ENCODE measurements at regions of chr12 and their contacts with region 1.

Region 1: GRCh38 chr12:24909667-24910066 is 39.2 kb downstream of the BCAT1 start:
- DNase-seq: no peak
- ATAC-seq: no peak
- H3K4me3 ChIP-seq: no peak overlapping the region
- H3K4me3 Mint-ChIP-seq: no peak overlapping the region
- H3K27ac ChIP-seq: no peak overlapping the region
- H3K27ac Mint-ChIP-seq: no peak overlapping the region
- H3K4me1 ChIP-seq: no peaks in the 10 kb centered on the region
- H3K4me1 Mint-ChIP-seq: no peaks in the 10 kb centered on the region
- H3K27me3 ChIP-seq: no peaks in the 10 kb centered on the region
- H3K27me3 Mint-ChIP-seq: no peaks in the 10 kb centered on the region

Region 2: GRCh38 chr12:24948757-24949722 is 39.4 kb after region 1 on chr12 and contains the start of gene BCAT1:
- CTCF ChIA-PET with region 1: no interaction called
- POLR2A ChIA-PET with region 1: no interaction called
- DNase-seq: peak in 17 of 35 experiments; percentile 2 to 37 (median 7)
- ATAC-seq: peak; percentile 44 to 66 (median 58)
- H3K4me3 ChIP-seq: peak within 1 kb of the TSS; percentile 52 to 82
- H3K4me3 Mint-ChIP-seq: peak within 1 kb of the TSS; percentile 73 to 94 (median 81)
- H3K27ac ChIP-seq: no peak within 1 kb of the TSS
- H3K27ac Mint-ChIP-seq: peak within 1 kb of the TSS in 1 of 2 donors; percentile 24
- H3K4me1 ChIP-seq: peaks cover 10 to 12% of the 10 kb centered on the region in 2 experiments
- H3K4me1 Mint-ChIP-seq: peaks cover 19 to 36% (median 23%) of the 10 kb centered on the region in 3 donors
- H3K27me3 ChIP-seq: peaks cover 0 to 20% of the 10 kb centered on the region in 2 experiments
- H3K27me3 Mint-ChIP-seq: peaks cover 36 to 54% of the 10 kb centered on the region in 2 donors
- total RNA-seq, gene BCAT1: 1.2 to 4.2 (median 3.2) TPM

Region 3: GRCh38 chr12:25009496-25010092 is 99.9 kb after region 1 on chr12:
- CTCF ChIA-PET with region 1: no interaction called
- POLR2A ChIA-PET with region 1: no interaction called
- DNase-seq: no peak
- ATAC-seq: no peak
- H3K4me3 ChIP-seq: no peak overlapping the region
- H3K4me3 Mint-ChIP-seq: no peak overlapping the region
- H3K27ac ChIP-seq: no peak overlapping the region
- H3K27ac Mint-ChIP-seq: no peak overlapping the region
- H3K4me1 ChIP-seq: no peaks in the 10 kb centered on the region
- H3K4me1 Mint-ChIP-seq: peaks cover 0 to 2% (median 0%) of the 10 kb centered on the region in 3 donors
- H3K27me3 ChIP-seq: no peaks in the 10 kb centered on the region
- H3K27me3 Mint-ChIP-seq: peaks cover 0 to under 1% of the 10 kb centered on the region in 2 donors

Region 4: GRCh38 chr12:26197832-26198231 is 1288.2 kb after region 1 on chr12:
- CTCF ChIA-PET with region 1: no interaction called
- POLR2A ChIA-PET with region 1: interaction called in 1 of 2 experiments, 19 read pairs
- DNase-seq: no peak
- ATAC-seq: no peak
- H3K4me3 ChIP-seq: no peak overlapping the region
- H3K4me3 Mint-ChIP-seq: no peak overlapping the region
- H3K27ac ChIP-seq: no peak overlapping the region
- H3K27ac Mint-ChIP-seq: no peak overlapping the region
- H3K4me1 ChIP-seq: peaks cover 2 to 7% of the 10 kb centered on the region in 2 experiments
- H3K4me1 Mint-ChIP-seq: peaks cover 7 to 12% (median 11%) of the 10 kb centered on the region in 3 donors
- H3K27me3 ChIP-seq: peaks cover 0 to 16% of the 10 kb centered on the region in 2 experiments
- H3K27me3 Mint-ChIP-seq: peaks cover 39 to 53% of the 10 kb centered on the region in 2 donors

Measured in T-cell (primary cell).